Activated CD4-positive, alpha-beta memory T cell treated with anti-CD3 and anti-CD28 coated beads for 36 hours (primary cell): ENCODE measurements at regions of chr4 and their contacts with region 1.

Region 1: DNA sequence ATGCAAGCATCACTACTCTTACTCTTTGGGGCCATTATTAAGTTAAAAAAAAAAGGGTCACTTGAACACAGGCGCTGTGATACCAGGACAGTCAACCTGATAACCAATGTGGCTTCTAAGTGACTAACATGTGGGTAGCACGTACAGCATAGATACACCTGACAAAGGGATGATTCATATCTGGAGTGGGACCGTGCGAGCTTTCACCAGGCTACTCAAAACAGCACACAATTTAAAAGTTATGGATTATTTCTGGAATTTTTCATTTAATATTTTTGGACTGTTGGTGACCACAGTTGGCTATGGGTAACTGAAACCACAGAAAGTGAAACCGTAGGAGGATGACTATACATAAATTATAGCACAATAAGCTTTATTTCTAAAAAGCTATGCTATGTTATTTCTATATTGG is 113.8 kb upstream of the STIM2 start:
- DNase-seq: peak; percentile 72
- H3K4me3 Mint-ChIP-seq: no peak overlapping the region
- H3K27ac Mint-ChIP-seq: no peak overlapping the region
- H3K4me1 Mint-ChIP-seq: peaks cover 13% of the 10 kb centered on the region
- H3K27me3 Mint-ChIP-seq: no peaks in the 10 kb centered on the region

Region 2: DNA sequence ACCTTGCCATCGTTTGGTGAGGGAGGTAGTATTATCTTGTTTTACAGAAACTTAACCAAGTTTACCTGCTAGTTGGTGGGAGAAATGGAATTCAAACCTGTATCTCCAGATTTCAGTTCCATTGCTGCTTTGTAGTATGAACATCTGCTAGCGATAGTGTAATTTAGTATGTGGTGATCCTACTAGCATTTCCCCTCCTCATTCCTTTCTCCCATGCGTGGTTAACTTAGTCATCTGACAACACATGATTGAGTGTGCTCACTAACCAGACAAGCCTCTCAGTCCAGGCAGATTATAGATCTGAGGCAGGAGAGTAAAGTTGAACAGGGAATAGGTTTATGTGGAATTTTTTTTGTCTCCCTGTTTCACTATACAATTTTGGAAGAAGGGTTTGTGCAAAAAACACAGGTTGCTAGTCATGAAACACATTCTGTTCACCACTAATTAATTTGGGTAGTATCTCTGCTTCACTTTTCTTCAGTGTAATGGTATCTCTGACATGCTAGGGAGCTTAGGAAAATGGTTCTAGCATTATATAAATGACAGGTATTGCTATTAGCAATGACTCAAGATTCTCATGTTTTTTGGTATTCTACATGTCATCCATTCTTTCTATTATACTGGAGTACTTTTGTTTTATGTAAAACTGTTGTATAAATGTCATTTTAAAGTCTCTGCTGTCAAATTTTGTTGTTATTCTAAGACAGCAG is 404.3 kb before region 1 on chr4:
- CTCF ChIA-PET with region 1: no interaction called
- POLR2A ChIA-PET with region 1: no interaction called
- intact Hi-C with region 1: no loop called
- DNase-seq: no peak
- H3K4me3 Mint-ChIP-seq: no peak overlapping the region
- H3K27ac Mint-ChIP-seq: no peak overlapping the region
- H3K4me1 Mint-ChIP-seq: peaks cover 59% of the 10 kb centered on the region
- H3K27me3 Mint-ChIP-seq: no peaks in the 10 kb centered on the region

Region 3: GRCh38 chr4:26441102-26441501 is 305.7 kb before region 1 on chr4:
- CTCF ChIA-PET with region 1: no interaction called
- POLR2A ChIA-PET with region 1: no interaction called
- intact Hi-C with region 1: no loop called
- DNase-seq: no peak
- H3K4me3 Mint-ChIP-seq: no peak overlapping the region
- H3K27ac Mint-ChIP-seq: no peak overlapping the region
- H3K4me1 Mint-ChIP-seq: no peaks in the 10 kb centered on the region
- H3K27me3 Mint-ChIP-seq: no peaks in the 10 kb centered on the region

Region 4: GRCh38 chr4:26731351-26732035 is 15.3 kb before region 1 on chr4:
- CTCF ChIA-PET with region 1: no interaction called
- POLR2A ChIA-PET with region 1: no interaction called
- intact Hi-C with region 1: loop called (anchors 1 kb)
- DNase-seq: peak; percentile 11
- H3K4me3 Mint-ChIP-seq: no peak overlapping the region
- H3K27ac Mint-ChIP-seq: no peak overlapping the region
- H3K4me1 Mint-ChIP-seq: peaks cover 11% of the 10 kb centered on the region
- H3K27me3 Mint-ChIP-seq: no peaks in the 10 kb centered on the region

Region 5: GRCh38 chr4:26878794-26879391 is 132.1 kb after region 1 on chr4:
- CTCF ChIA-PET with region 1: no interaction called
- POLR2A ChIA-PET with region 1: no interaction called
- intact Hi-C with region 1: loop called (anchors 5 kb)
- DNase-seq: peak; percentile 47
- H3K4me3 Mint-ChIP-seq: peak overlapping the region; percentile 60
- H3K27ac Mint-ChIP-seq: peak overlapping the region; percentile 99
- H3K4me1 Mint-ChIP-seq: peaks cover 73% of the 10 kb centered on the region
- H3K27me3 Mint-ChIP-seq: no peaks in the 10 kb centered on the region

Region 6: GRCh38 chr4:27873596-27873995 is 1126.8 kb after region 1 on chr4:
- CTCF ChIA-PET with region 1: no interaction called
- POLR2A ChIA-PET with region 1: no interaction called
- intact Hi-C with region 1: no loop called
- DNase-seq: no peak
- H3K4me3 Mint-ChIP-seq: no peak overlapping the region
- H3K27ac Mint-ChIP-seq: no peak overlapping the region
- H3K4me1 Mint-ChIP-seq: no peaks in the 10 kb centered on the region
- H3K27me3 Mint-ChIP-seq: no peaks in the 10 kb centered on the region